PC-9 (cell line): ENCODE measurements at regions of chr3 and their contacts with region 1.

Region 1: GRCh38 chr3:22887664-22888291 is 315.3 kb upstream of the UBE2E2 start:
- DNase-seq: peak in 1 of 2 experiments; percentile 4
- H3K4me3 ChIP-seq: no peak overlapping the region
- H3K27ac ChIP-seq: no peak overlapping the region
- H3K4me1 ChIP-seq: no peaks in the 10 kb centered on the region
- H3K27me3 ChIP-seq: no peaks in the 10 kb centered on the region
- CTCF ChIP-seq: peak; percentile 78

Region 2: GRCh38 chr3:22175947-22176346 is 711.8 kb before region 1 on chr3:
- CTCF ChIA-PET with region 1: no interaction called
- POLR2A ChIA-PET with region 1: no interaction called
- intact Hi-C with region 1: loop called (anchors 5 kb)
- DNase-seq: no peak
- H3K4me3 ChIP-seq: no peak overlapping the region
- H3K27ac ChIP-seq: no peak overlapping the region
- H3K4me1 ChIP-seq: no peaks in the 10 kb centered on the region
- H3K27me3 ChIP-seq: no peaks in the 10 kb centered on the region
- CTCF ChIP-seq: peak; percentile 49

Region 3: DNA sequence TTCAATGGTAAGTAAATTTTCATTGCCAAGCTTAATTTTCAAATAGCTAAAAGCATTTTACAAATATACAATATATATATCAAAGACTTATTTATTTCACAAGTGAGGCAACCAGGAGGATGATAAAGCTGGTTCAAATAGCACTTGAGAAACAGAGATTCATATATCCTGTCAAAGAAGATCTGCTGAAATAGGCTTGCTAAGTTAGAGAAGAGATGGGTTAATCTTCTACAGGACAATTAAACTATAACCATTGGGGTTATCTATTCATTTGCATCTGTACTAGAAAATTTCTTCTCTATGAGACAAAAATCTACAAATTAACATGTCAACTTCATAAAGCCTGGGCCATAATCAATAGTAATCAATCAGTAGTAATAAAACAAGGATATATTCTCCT is 322.4 kb before region 1 on chr3:
- CTCF ChIA-PET with region 1: interaction called, 3 read pairs
- POLR2A ChIA-PET with region 1: no interaction called
- intact Hi-C with region 1: loop called (anchors 1 kb)
- DNase-seq: no peak
- H3K4me3 ChIP-seq: no peak overlapping the region
- H3K27ac ChIP-seq: no peak overlapping the region
- H3K4me1 ChIP-seq: no peaks in the 10 kb centered on the region
- H3K27me3 ChIP-seq: no peaks in the 10 kb centered on the region
- CTCF ChIP-seq: no peak

Region 4: GRCh38 chr3:22659651-22660475 is 227.9 kb before region 1 on chr3:
- CTCF ChIA-PET with region 1: no interaction called
- POLR2A ChIA-PET with region 1: no interaction called
- intact Hi-C with region 1: no loop called
- DNase-seq: no peak
- H3K4me3 ChIP-seq: no peak overlapping the region
- H3K27ac ChIP-seq: no peak overlapping the region
- H3K4me1 ChIP-seq: no peaks in the 10 kb centered on the region
- H3K27me3 ChIP-seq: no peaks in the 10 kb centered on the region
- CTCF ChIP-seq: no peak

Region 5: GRCh38 chr3:22691407-22691806 is 196.4 kb before region 1 on chr3:
- CTCF ChIA-PET with region 1: no interaction called
- POLR2A ChIA-PET with region 1: no interaction called
- intact Hi-C with region 1: loop called (anchors 5 kb)
- DNase-seq: no peak
- H3K4me3 ChIP-seq: no peak overlapping the region
- H3K27ac ChIP-seq: no peak overlapping the region
- H3K4me1 ChIP-seq: no peaks in the 10 kb centered on the region
- H3K27me3 ChIP-seq: no peaks in the 10 kb centered on the region
- CTCF ChIP-seq: no peak